CD8-positive, alpha-beta T cell (primary cell): ENCODE measurements at regions of chr12 and their contacts with region 1.

Region 1: GRCh38 chr12:64687816-64688215 is 71.4 kb downstream of the GNS start:
- DNase-seq: peak in 2 of 9 experiments; percentile 40 to 63
- ATAC-seq: peak; percentile 9
- H3K4me3 ChIP-seq: no peak overlapping the region
- H3K4me3 Mint-ChIP-seq: peak overlapping the region; percentile 67
- H3K27ac ChIP-seq: peak overlapping the region; percentile 26 to 57
- H3K27ac Mint-ChIP-seq: peak overlapping the region; percentile 94
- H3K4me1 ChIP-seq: peaks cover 95% of the 10 kb centered on the region
- H3K4me1 Mint-ChIP-seq: peaks cover 77% of the 10 kb centered on the region
- H3K27me3 ChIP-seq: no peaks in the 10 kb centered on the region
- H3K27me3 Mint-ChIP-seq: no peaks in the 10 kb centered on the region
- CTCF ChIP-seq: no peak

Region 2: GRCh38 chr12:64650762-64651161 is 37.1 kb before region 1 on chr12:
- CTCF ChIA-PET with region 1: no interaction called
- POLR2A ChIA-PET with region 1: no interaction called
- intact Hi-C with region 1: loop called (anchors 5 kb)
- DNase-seq: no peak
- ATAC-seq: no peak
- H3K4me3 ChIP-seq: no peak overlapping the region
- H3K4me3 Mint-ChIP-seq: peak overlapping the region; percentile 0
- H3K27ac ChIP-seq: no peak overlapping the region
- H3K27ac Mint-ChIP-seq: peak overlapping the region; percentile 68
- H3K4me1 ChIP-seq: peaks cover 62% of the 10 kb centered on the region
- H3K4me1 Mint-ChIP-seq: peaks cover 78% of the 10 kb centered on the region
- H3K27me3 ChIP-seq: no peaks in the 10 kb centered on the region
- H3K27me3 Mint-ChIP-seq: no peaks in the 10 kb centered on the region
- CTCF ChIP-seq: no peak

Region 3: GRCh38 chr12:64669270-64669842 is 18.5 kb before region 1 on chr12:
- CTCF ChIA-PET with region 1: interaction called, 90 read pairs
- POLR2A ChIA-PET with region 1: interaction called, 96 read pairs
- intact Hi-C with region 1: loop called (anchors 1 kb)
- DNase-seq: peak; percentile 18 to 94 (median 57)
- ATAC-seq: peak; percentile 79
- H3K4me3 ChIP-seq: peak overlapping the region; percentile 51 to 57
- H3K4me3 Mint-ChIP-seq: peak overlapping the region; percentile 87
- H3K27ac ChIP-seq: peak overlapping the region; percentile 77 to 94
- H3K27ac Mint-ChIP-seq: peak overlapping the region; percentile 98
- H3K4me1 ChIP-seq: peaks cover 92% of the 10 kb centered on the region
- H3K4me1 Mint-ChIP-seq: peaks cover 90% of the 10 kb centered on the region
- H3K27me3 ChIP-seq: no peaks in the 10 kb centered on the region
- H3K27me3 Mint-ChIP-seq: no peaks in the 10 kb centered on the region
- CTCF ChIP-seq: no peak

Region 4: DNA sequence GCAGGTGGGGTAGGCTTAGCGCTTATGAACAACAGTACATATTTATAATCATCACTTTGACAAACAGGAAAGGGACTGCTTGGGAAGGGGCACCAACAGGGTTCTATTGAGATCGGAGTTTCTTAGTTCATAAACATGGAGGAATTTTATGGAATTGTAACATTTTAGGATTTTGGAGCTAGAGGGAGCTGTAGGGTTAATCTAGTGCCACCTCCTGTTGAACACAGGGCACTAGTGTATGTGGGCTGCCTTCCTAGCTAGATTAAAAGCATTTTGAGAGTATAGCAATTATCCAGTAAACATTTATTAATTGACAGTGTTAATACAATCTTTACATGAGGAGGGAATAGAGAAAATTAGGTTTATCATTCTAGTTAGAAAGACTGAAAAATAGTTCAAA is 113.6 kb after region 1 on chr12:
- CTCF ChIA-PET with region 1: no interaction called
- POLR2A ChIA-PET with region 1: no interaction called
- intact Hi-C with region 1: no loop called
- DNase-seq: no peak
- ATAC-seq: no peak
- H3K4me3 ChIP-seq: no peak overlapping the region
- H3K4me3 Mint-ChIP-seq: no peak overlapping the region
- H3K27ac ChIP-seq: no peak overlapping the region
- H3K27ac Mint-ChIP-seq: no peak overlapping the region
- H3K4me1 ChIP-seq: no peaks in the 10 kb centered on the region
- H3K4me1 Mint-ChIP-seq: peaks cover 5% of the 10 kb centered on the region
- H3K27me3 ChIP-seq: peaks cover 0 to 3% of the 10 kb centered on the region in 2 experiments
- H3K27me3 Mint-ChIP-seq: peaks cover 30% of the 10 kb centered on the region
- CTCF ChIP-seq: no peak